ENCODE measurements at regions of chr22 and their contacts with region 1.

Region 1: DNA sequence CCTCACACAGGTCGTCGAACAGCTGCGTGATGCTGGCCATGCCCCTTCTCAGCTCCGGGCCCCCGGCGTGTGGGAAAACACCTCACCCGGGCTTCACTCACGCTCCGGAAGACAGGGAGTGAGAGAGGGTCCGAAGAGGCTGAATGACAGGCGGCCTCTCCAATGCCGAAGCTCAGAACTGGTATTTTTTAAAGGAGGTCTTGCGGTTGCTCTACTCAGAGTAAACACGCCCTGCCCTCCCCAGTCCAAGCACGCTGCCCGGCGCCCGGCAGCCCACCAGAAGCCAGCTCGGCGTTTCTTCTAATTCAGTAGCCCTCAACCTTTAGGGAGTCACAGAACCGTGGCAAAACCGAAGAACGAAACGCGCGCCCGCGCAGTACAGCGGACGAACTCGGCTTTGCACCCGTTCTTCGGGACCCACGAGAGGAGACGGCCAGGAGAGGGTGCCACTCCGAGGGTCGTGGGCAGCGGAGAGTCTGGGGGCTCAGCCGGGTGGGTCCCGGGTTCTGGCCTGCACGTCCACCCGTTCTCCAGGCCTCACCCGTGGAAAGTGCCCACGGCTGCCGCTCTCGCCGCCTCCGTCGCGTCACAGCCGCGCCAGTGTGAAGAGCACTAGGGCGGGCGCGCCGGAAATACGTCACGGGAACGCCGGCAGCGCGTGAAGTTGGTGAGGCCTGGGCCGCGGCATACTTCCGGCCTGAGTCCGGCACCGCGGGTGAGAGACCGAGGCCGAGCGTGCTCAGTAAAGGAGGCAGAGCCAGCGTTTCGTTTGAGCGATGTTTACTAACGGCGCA is at the start of gene TUBGCP6:
- DNase-seq: peak; percentile 63 to 98
- H3K4me3 ChIP-seq: peak within 1 kb of the TSS; percentile 70 to 91
- H3K27ac ChIP-seq: peak within 1 kb of the TSS; percentile 92 to 95
- H3K4me1 ChIP-seq: peaks cover 14 to 35% of the 10 kb centered on the region in 2 donors
- H3K27me3 ChIP-seq: no peaks in the 10 kb centered on the region
- CTCF ChIP-seq: peak in 1 of 3 experiments; percentile 11
- total RNA-seq, gene TUBGCP6: 58.1 TPM

Region 2: GRCh38 chr22:50627642-50628542 is 383.3 kb after region 1 on chr22 and contains the start of gene ARSA:
- intact Hi-C with region 1: loop called (anchors 5 kb)
- DNase-seq: peak; percentile 27 to 86
- H3K4me3 ChIP-seq: peak within 1 kb of the TSS; percentile 63 to 67
- H3K27ac ChIP-seq: peak within 1 kb of the TSS; percentile 46 to 84
- H3K4me1 ChIP-seq: peaks cover 4 to 12% of the 10 kb centered on the region in 2 donors
- H3K27me3 ChIP-seq: no peaks in the 10 kb centered on the region
- CTCF ChIP-seq: peak; percentile 1 to 47 (median 18)
- total RNA-seq, gene ARSA: 111 TPM

Measured in ascending aorta (tissue), 2 donors.